A673 (cell line): ENCODE measurements at regions of chr12 and their contacts with region 1.

Region 1: GRCh38 chr12:24778486-24779304 is 170.2 kb downstream of the BCAT1 start:
- DNase-seq: peak; percentile 81
- H3K4me3 ChIP-seq: no peak overlapping the region
- H3K27ac ChIP-seq: peak overlapping the region; percentile 52
- H3K4me1 ChIP-seq: peaks cover 55% of the 10 kb centered on the region
- H3K27me3 ChIP-seq: no peaks in the 10 kb centered on the region
- CTCF ChIP-seq: peak; percentile 60

Region 2: DNA sequence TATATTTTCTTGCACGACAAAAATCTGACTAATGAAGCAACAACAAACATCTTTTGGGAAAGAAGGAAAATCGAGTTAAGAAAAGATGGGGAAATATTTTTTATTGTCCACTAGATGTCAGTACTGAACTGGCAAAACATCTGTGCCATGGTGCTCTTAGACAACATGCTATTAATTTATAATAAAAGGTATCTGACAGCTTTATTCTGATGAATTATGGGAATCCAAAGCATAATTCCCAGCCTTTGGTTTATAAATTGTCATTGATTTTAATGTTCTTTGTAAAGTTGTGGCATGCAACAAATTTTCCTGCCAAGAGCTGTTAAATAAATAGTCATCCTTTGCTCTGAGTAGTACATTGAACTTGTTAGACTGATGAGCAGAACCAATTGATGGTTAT is 1922.5 kb before region 1 on chr12:
- CTCF ChIA-PET with region 1: no interaction called
- POLR2A ChIA-PET with region 1: no interaction called
- intact Hi-C with region 1: loop called (anchors 5 kb)
- DNase-seq: peak; percentile 55
- H3K4me3 ChIP-seq: no peak overlapping the region
- H3K27ac ChIP-seq: no peak overlapping the region
- H3K4me1 ChIP-seq: no peaks in the 10 kb centered on the region
- H3K27me3 ChIP-seq: no peaks in the 10 kb centered on the region
- CTCF ChIP-seq: peak; percentile 62

Region 3: GRCh38 chr12:23204933-23205778 is 1573.5 kb before region 1 on chr12:
- CTCF ChIA-PET with region 1: interaction called, 3 read pairs
- POLR2A ChIA-PET with region 1: no interaction called
- intact Hi-C with region 1: loop called (anchors 2 kb)
- DNase-seq: peak; percentile 78
- H3K4me3 ChIP-seq: no peak overlapping the region
- H3K27ac ChIP-seq: no peak overlapping the region
- H3K4me1 ChIP-seq: peaks cover 3% of the 10 kb centered on the region
- H3K27me3 ChIP-seq: no peaks in the 10 kb centered on the region
- CTCF ChIP-seq: peak; percentile 89

Region 4: GRCh38 chr12:24012528-24012927 is 766.2 kb before region 1 on chr12:
- CTCF ChIA-PET with region 1: no interaction called
- POLR2A ChIA-PET with region 1: no interaction called
- intact Hi-C with region 1: loop called (anchors 5 kb)
- DNase-seq: peak; percentile 45
- H3K4me3 ChIP-seq: no peak overlapping the region
- H3K27ac ChIP-seq: no peak overlapping the region
- H3K4me1 ChIP-seq: no peaks in the 10 kb centered on the region
- H3K27me3 ChIP-seq: no peaks in the 10 kb centered on the region
- CTCF ChIP-seq: peak; percentile 45

Region 5: DNA sequence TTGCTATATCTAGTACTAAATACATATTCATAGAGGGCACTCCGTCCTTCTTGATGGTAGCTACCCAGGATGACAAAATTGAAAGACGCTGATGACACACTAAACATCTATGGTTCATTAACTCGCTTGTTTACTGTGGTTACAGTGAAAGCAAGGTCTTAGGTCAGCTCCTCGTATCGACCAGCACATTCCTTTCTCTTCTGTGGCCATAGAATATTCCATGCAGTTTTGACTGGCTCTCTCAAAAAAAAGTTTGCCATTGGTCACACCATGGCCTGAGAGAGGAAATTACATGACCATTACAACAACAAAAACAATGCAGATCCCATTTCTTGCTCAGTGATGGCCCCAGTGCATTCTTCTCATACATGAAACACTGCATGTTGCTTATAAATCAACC is 417.8 kb before region 1 on chr12:
- CTCF ChIA-PET with region 1: no interaction called
- POLR2A ChIA-PET with region 1: no interaction called
- intact Hi-C with region 1: loop called (anchors 5 kb)
- DNase-seq: no peak
- H3K4me3 ChIP-seq: no peak overlapping the region
- H3K27ac ChIP-seq: no peak overlapping the region
- H3K4me1 ChIP-seq: peaks cover 52% of the 10 kb centered on the region
- H3K27me3 ChIP-seq: no peaks in the 10 kb centered on the region
- CTCF ChIP-seq: no peak

Region 6: DNA sequence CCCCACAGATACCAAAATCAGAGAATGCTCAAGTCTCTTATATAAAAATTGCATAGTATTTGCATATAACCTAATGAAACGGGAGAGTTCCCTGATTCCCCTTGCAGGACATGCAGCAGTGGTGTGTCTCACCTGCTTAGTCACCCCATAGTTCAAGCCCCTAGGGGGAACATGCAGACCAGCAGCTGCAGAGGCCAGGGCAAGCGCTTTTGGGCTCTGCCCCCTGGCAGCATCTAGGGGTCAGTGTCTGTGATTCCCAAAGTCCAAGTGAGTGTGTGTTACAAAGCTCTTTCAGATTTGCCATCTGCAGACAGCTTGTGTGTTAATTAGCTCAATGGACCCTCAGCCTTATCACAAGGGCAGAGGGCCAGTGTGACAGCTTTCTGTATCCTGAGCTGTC is 306.1 kb after region 1 on chr12:
- CTCF ChIA-PET with region 1: no interaction called
- POLR2A ChIA-PET with region 1: no interaction called
- intact Hi-C with region 1: no loop called
- DNase-seq: no peak
- H3K4me3 ChIP-seq: no peak overlapping the region
- H3K27ac ChIP-seq: no peak overlapping the region
- H3K4me1 ChIP-seq: no peaks in the 10 kb centered on the region
- H3K27me3 ChIP-seq: no peaks in the 10 kb centered on the region
- CTCF ChIP-seq: no peak